Activated CD8-positive, alpha-beta T cell treated with anti-CD3 and anti-CD28 coated beads for 36 hours (primary cell): ENCODE measurements at regions of chr3 and their contacts with region 1.

Region 1: DNA sequence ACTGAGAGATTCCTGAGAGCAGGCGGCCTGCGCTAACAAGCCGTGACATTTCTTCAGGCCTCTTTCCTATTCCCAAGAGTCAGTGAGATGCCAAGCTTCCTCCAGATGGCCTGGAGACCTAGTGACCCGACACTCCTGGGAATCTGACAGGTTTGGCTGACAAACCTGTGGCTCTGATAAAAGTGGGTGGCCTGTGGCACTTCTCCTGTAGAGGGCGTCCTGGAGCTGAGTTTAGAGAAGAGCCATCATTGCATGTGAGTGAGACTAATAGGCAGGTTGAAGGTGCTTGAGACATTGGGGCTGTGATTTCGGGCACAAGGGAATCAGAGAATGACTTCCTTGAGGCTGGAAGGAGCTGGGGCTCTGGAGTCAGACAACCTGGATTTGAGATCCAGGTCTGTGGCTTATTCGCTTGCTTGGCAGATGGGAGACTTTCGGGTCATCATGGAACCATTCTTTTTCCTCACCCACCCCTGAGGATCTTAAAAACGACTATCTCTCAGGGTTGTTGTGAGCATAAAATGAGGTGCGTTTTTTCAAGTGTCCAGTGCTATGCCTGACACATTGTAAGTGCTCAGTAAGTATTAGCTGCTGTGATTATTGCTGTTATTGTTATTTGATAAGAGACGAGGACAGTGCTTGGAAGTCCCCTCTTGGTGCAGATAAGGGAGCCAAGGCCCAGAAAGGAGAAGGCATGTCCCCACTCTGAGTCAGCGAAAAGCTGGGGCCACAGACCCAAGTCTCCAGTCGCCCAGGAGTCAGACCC is 77.2 kb downstream of the SCN10A start:
- DNase-seq: peak; percentile 74
- ATAC-seq: no peak
- H3K4me3 Mint-ChIP-seq: no peak overlapping the region
- H3K27ac Mint-ChIP-seq: no peak overlapping the region
- H3K4me1 Mint-ChIP-seq: no peaks in the 10 kb centered on the region
- H3K27me3 Mint-ChIP-seq: peaks cover 19% of the 10 kb centered on the region
- CTCF ChIP-seq: peak; percentile 64

Region 2: GRCh38 chr3:38314112-38314763 is 424.6 kb before region 1 on chr3:
- CTCF ChIA-PET with region 1: no interaction called
- POLR2A ChIA-PET with region 1: no interaction called
- intact Hi-C with region 1: no loop called
- DNase-seq: no peak
- ATAC-seq: no peak
- H3K4me3 Mint-ChIP-seq: no peak overlapping the region
- H3K27ac Mint-ChIP-seq: no peak overlapping the region
- H3K4me1 Mint-ChIP-seq: no peaks in the 10 kb centered on the region
- H3K27me3 Mint-ChIP-seq: no peaks in the 10 kb centered on the region
- CTCF ChIP-seq: no peak

Region 3: GRCh38 chr3:38843898-38844297 is 105.1 kb after region 1 on chr3:
- CTCF ChIA-PET with region 1: interaction called, 9 read pairs
- POLR2A ChIA-PET with region 1: no interaction called
- intact Hi-C with region 1: loop called (anchors 5 kb)
- DNase-seq: peak; percentile 26
- ATAC-seq: peak; percentile 64
- H3K4me3 Mint-ChIP-seq: no peak overlapping the region
- H3K27ac Mint-ChIP-seq: no peak overlapping the region
- H3K4me1 Mint-ChIP-seq: no peaks in the 10 kb centered on the region
- H3K27me3 Mint-ChIP-seq: peaks cover 19% of the 10 kb centered on the region
- CTCF ChIP-seq: peak; percentile 46

Region 4: GRCh38 chr3:38992117-38992760 is 253.4 kb after region 1 on chr3:
- CTCF ChIA-PET with region 1: no interaction called
- POLR2A ChIA-PET with region 1: no interaction called
- intact Hi-C with region 1: loop called (anchors 10 kb)
- DNase-seq: no peak
- ATAC-seq: no peak
- H3K4me3 Mint-ChIP-seq: no peak overlapping the region
- H3K27ac Mint-ChIP-seq: no peak overlapping the region
- H3K4me1 Mint-ChIP-seq: no peaks in the 10 kb centered on the region
- H3K27me3 Mint-ChIP-seq: peaks cover 6% of the 10 kb centered on the region
- CTCF ChIP-seq: no peak